ENCODE measurements at regions of chr1 and their contacts with region 1.

Region 1: GRCh38 chr1:29181413-29182225 is at the start of gene SRSF4:
- DNase-seq: peak; percentile 97 to 99 (median 99)
- H3K4me3 ChIP-seq: peak within 1 kb of the TSS; percentile 84 to 97 (median 94)
- H3K27ac ChIP-seq: peak within 1 kb of the TSS; percentile 98 to 99
- H3K4me1 ChIP-seq: peaks cover 19 to 41% (median 28%) of the 10 kb centered on the region in 4 experiments
- H3K27me3 ChIP-seq: no peaks in the 10 kb centered on the region

Region 2: GRCh38 chr1:29197585-29197924 is 15.9 kb after region 1 on chr1:
- CTCF ChIA-PET with region 1: interaction called, 89 read pairs
- POLR2A ChIA-PET with region 1: interaction called, 6 read pairs
- DNase-seq: peak; percentile 56 to 75 (median 75)
- H3K4me3 ChIP-seq: no peak overlapping the region
- H3K27ac ChIP-seq: no peak overlapping the region
- H3K4me1 ChIP-seq: peaks cover 5 to 21% (median 19%) of the 10 kb centered on the region in 4 experiments
- H3K27me3 ChIP-seq: no peaks in the 10 kb centered on the region

Region 3: GRCh38 chr1:29202584-29203340 is 21.1 kb after region 1 on chr1:
- CTCF ChIA-PET with region 1: interaction called, 89 read pairs
- POLR2A ChIA-PET with region 1: interaction called, 6 read pairs
- DNase-seq: peak; percentile 88 to 94 (median 93)
- H3K4me3 ChIP-seq: no peak overlapping the region
- H3K27ac ChIP-seq: peak overlapping the region in 1 of 2 experiments; percentile 16
- H3K4me1 ChIP-seq: peaks cover 5 to 19% (median 13%) of the 10 kb centered on the region in 4 experiments
- H3K27me3 ChIP-seq: no peaks in the 10 kb centered on the region